Right ventricle myocardium inferior (tissue), 1 donor: ENCODE measurements at regions of chr10 and their contacts with region 1.

Region 1: GRCh38 chr10:49009199-49009979 is 69.7 kb upstream of the LRRC18 start:
- DNase-seq: no peak
- ATAC-seq: peak; percentile 40

Region 2: DNA sequence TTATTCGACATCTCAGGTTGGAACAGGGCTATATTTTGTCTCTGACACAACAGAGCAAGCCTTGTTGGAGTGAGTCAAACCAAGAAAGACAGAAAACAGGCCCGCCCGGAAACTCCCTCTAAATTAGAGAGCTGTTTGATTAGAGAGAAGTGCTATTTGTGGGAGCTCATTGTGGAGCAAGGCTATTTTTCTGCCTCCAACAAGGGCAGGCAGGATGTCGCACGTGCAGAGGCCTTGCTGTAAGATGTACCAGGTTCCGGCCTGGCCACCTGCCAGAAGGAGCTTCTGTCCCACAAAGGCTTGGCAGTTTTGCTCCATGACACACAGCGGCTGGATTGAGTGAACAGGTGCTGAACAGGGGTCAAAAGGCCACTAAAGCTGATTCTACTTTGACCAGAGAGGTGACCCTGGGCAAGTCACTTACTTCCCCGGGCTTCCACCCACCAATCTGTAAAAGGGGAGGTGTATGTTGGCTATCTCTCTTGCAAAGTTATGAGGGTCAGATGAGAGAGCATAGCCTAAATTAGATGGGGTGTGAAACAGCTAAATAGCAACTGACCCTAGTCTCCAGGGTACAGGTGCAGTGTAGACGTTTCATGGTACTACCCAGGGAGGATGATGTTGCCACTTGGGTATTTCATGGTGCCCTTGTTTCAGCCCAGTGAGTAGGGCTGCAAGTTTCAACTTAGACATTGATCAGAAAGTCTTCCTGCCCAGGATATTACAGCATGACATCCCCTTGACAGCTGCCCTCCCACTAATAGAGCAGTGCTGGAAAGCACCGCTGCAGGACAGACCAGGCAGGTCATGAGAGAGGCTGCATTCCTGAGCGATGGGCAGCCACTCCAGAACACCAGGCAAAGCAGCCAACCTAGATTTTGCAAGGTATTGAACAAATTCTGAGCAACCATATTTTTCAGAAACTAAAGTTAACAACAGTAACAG is 43.9 kb after region 1 on chr10:
- intact Hi-C with region 1: loop called (anchors 5 kb)
- DNase-seq: peak; percentile 74
- ATAC-seq: peak; percentile 61